ENCODE measurements at regions of chr1 and their contacts with region 1.

Region 1: DNA sequence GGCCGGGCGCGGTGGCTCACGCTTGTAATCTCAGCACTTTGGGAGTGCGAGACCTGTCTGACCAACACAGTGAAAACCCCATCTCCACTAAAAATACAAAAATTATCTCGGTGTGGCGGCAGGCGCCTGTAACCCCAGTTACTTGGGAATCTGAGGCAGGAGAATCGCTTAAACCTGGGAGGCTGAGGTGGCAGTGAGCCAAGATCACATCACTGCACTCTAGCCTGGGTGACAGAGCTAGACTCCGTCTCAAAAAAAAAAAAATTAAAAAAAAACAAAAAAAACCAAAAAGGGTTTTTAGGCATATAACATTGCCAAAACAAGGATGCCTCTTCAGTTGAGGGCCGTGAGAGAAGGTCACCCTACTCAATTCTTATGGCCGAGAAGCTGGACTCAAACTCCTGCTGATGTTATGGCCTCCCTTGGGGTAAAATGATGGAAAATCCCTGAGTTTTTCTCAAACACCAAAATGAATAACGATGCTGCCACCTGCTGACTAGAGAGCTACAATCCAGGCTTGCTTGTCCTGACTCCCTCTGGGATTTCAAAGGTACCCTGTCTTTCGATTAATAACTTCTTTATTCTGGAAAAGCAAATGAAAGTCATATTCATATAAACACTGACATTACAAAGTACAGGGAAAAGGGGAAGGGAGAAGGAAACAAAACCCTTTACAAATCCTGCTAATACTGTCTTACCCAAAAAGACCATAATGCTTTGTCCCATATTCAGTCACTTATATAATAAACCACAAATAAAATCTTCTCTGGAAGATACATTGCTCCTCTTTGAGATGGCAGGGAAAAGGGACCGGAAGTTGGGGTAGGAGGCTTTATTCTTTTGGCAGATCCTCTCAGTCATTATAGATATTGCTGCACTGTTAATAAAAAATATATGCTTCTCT is 10.7 kb downstream of the RAB42 start:
- DNase-seq: peak; percentile 79
- H3K4me3 Mint-ChIP-seq: no peak overlapping the region
- H3K27ac Mint-ChIP-seq: no peak overlapping the region
- H3K4me1 Mint-ChIP-seq: peaks cover 15% of the 10 kb centered on the region
- H3K27me3 Mint-ChIP-seq: no peaks in the 10 kb centered on the region

Region 2: DNA sequence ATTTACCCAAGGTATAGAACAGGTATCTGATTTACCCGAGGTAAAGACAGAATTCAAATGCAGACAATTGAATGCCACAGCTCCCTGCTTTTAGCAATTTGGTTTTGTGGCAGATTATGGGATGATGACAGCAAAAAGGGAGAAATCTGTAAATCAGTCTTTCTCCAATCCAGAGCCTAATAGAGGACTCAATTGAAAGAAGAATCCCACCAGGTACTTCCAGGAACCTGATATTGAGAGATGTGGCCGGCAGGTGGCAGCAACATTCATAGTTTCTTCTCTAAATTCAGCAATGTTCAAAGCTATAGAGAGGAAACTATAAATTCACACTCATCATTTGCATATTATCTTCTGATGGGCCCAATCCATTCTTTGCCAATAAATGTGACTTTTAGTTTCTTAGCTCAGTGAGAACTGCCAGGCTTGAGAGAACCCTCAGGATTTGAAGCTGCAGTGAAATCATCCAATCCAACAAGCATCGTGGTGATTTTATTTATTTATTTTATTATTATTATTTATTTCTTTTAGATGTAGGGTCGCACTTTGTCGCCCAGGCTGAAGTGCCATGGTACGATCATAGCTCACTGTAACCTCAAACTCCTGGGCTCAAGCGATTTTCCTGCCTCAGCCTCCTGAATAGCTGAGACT is 243.1 kb before region 1 on chr1:
- intact Hi-C with region 1: loop called (anchors 5 kb)
- DNase-seq: peak; percentile 90
- H3K4me3 Mint-ChIP-seq: no peak overlapping the region
- H3K27ac Mint-ChIP-seq: no peak overlapping the region
- H3K4me1 Mint-ChIP-seq: peaks cover 2% of the 10 kb centered on the region
- H3K27me3 Mint-ChIP-seq: peaks cover 4% of the 10 kb centered on the region

Region 3: DNA sequence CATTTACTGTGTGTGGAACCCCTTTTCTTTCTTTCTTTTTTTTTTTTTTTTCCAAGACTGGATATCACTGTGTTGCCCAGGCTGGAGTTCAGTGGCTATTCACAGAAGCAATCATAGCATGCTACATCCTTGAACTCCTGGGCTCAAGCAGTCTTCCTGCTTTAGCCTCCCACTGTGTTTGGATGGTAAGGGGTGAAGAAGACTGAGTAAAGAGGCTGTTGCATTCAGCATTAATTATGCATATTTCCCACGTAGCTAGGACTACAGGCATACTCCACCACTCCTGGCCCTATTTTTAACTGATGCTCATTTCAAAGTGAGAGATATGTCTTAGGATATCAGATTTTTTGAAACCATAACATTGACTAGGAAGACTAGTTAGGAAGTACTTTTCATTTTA is 193.7 kb before region 1 on chr1:
- intact Hi-C with region 1: loop called (anchors 5 kb)
- DNase-seq: no peak
- H3K4me3 Mint-ChIP-seq: no peak overlapping the region
- H3K27ac Mint-ChIP-seq: no peak overlapping the region
- H3K4me1 Mint-ChIP-seq: peaks cover 7% of the 10 kb centered on the region
- H3K27me3 Mint-ChIP-seq: no peaks in the 10 kb centered on the region

Region 4: GRCh38 chr1:28456078-28456477 is 146.7 kb before region 1 on chr1:
- intact Hi-C with region 1: no loop called
- DNase-seq: peak; percentile 71
- H3K4me3 Mint-ChIP-seq: peak overlapping the region; percentile 14
- H3K27ac Mint-ChIP-seq: peak overlapping the region; percentile 79
- H3K4me1 Mint-ChIP-seq: peaks cover 23% of the 10 kb centered on the region
- H3K27me3 Mint-ChIP-seq: no peaks in the 10 kb centered on the region

Measured in activated CD4-positive, alpha-beta T cell treated with anti-CD3 and anti-CD28 coated beads, Interleukin-2, amount 10 ng/mL, durations not matched to agents 24 days and 14 days (primary cell).